PC-9 (cell line): ENCODE measurements at regions of chr1 and their contacts with region 1.

Region 1: GRCh38 chr1:28581536-28582247 is 10.4 kb upstream of the RAB42 start:
- DNase-seq: peak; percentile 84 to 93
- H3K4me3 ChIP-seq: peak overlapping the region; percentile 87
- H3K27ac ChIP-seq: peak overlapping the region; percentile 81
- H3K4me1 ChIP-seq: peaks cover 9% of the 10 kb centered on the region
- H3K27me3 ChIP-seq: no peaks in the 10 kb centered on the region
- CTCF ChIP-seq: no peak

Region 2: GRCh38 chr1:28266920-28267322 is 314.8 kb before region 1 on chr1:
- CTCF ChIA-PET with region 1: no interaction called
- POLR2A ChIA-PET with region 1: interaction called, 21 read pairs
- intact Hi-C with region 1: no loop called
- DNase-seq: no peak
- H3K4me3 ChIP-seq: no peak overlapping the region
- H3K27ac ChIP-seq: no peak overlapping the region
- H3K4me1 ChIP-seq: peaks cover 4% of the 10 kb centered on the region; the same call in 1 of the 2 replicates
- H3K27me3 ChIP-seq: no peaks in the 10 kb centered on the region
- CTCF ChIP-seq: no peak

Region 3: GRCh38 chr1:28280501-28280900 is 301.2 kb before region 1 on chr1:
- CTCF ChIA-PET with region 1: no interaction called
- POLR2A ChIA-PET with region 1: no interaction called
- intact Hi-C with region 1: no loop called
- DNase-seq: no peak
- H3K4me3 ChIP-seq: no peak overlapping the region
- H3K27ac ChIP-seq: no peak overlapping the region
- H3K4me1 ChIP-seq: no peaks in the 10 kb centered on the region
- H3K27me3 ChIP-seq: no peaks in the 10 kb centered on the region
- CTCF ChIP-seq: no peak

Region 4: DNA sequence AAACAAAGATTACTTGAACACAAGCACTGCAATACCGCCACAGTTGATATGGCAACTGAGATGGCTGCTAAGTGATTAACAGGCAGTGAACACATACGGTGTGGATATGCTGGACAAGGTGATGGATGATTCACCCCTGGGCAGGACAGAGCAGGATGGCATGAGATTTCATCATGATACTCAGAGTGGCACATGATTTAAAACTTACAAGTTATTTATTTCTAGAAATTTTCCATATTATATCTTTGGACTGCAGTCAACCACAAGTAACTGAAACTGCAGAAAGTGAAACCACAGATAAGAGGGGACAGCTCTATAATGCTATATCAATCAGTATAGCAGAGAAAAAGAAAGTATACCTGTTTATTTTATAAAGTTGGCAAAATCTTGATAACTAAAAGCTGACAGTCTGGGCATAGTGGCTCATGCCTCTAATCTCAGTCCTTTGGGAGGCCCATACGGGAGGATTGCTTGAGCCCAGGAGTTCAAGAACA is 164.2 kb before region 1 on chr1:
- CTCF ChIA-PET with region 1: no interaction called
- POLR2A ChIA-PET with region 1: no interaction called
- intact Hi-C with region 1: no loop called
- DNase-seq: peak; percentile 58 to 85
- H3K4me3 ChIP-seq: no peak overlapping the region
- H3K27ac ChIP-seq: peak overlapping the region; percentile 100
- H3K4me1 ChIP-seq: peaks cover 21% of the 10 kb centered on the region
- H3K27me3 ChIP-seq: no peaks in the 10 kb centered on the region
- CTCF ChIP-seq: no peak

Region 5: GRCh38 chr1:28437934-28438699 is 143.6 kb before region 1 on chr1:
- CTCF ChIA-PET with region 1: no interaction called
- POLR2A ChIA-PET with region 1: no interaction called
- intact Hi-C with region 1: no loop called
- DNase-seq: peak; percentile 87 to 93
- H3K4me3 ChIP-seq: peak overlapping the region; percentile 56
- H3K27ac ChIP-seq: peak overlapping the region; percentile 79
- H3K4me1 ChIP-seq: peaks cover 37% of the 10 kb centered on the region
- H3K27me3 ChIP-seq: no peaks in the 10 kb centered on the region
- CTCF ChIP-seq: no peak

Region 6: GRCh38 chr1:28470146-28470545 is 111.5 kb before region 1 on chr1:
- CTCF ChIA-PET with region 1: no interaction called
- POLR2A ChIA-PET with region 1: interaction called, 13 read pairs
- intact Hi-C with region 1: no loop called
- DNase-seq: no peak
- H3K4me3 ChIP-seq: no peak overlapping the region
- H3K27ac ChIP-seq: no peak overlapping the region
- H3K4me1 ChIP-seq: peaks cover 8% of the 10 kb centered on the region
- H3K27me3 ChIP-seq: no peaks in the 10 kb centered on the region
- CTCF ChIP-seq: no peak

Region 7: GRCh38 chr1:28526889-28527288 is 54.8 kb before region 1 on chr1:
- CTCF ChIA-PET with region 1: no interaction called
- POLR2A ChIA-PET with region 1: no interaction called
- intact Hi-C with region 1: loop called (anchors 2 kb)
- DNase-seq: peak; percentile 92 to 97
- H3K4me3 ChIP-seq: peak overlapping the region; percentile 19; the same call in 1 of the 2 replicates
- H3K27ac ChIP-seq: peak overlapping the region; percentile 98
- H3K4me1 ChIP-seq: peaks cover 42% of the 10 kb centered on the region
- H3K27me3 ChIP-seq: no peaks in the 10 kb centered on the region
- CTCF ChIP-seq: no peak

Region 8: DNA sequence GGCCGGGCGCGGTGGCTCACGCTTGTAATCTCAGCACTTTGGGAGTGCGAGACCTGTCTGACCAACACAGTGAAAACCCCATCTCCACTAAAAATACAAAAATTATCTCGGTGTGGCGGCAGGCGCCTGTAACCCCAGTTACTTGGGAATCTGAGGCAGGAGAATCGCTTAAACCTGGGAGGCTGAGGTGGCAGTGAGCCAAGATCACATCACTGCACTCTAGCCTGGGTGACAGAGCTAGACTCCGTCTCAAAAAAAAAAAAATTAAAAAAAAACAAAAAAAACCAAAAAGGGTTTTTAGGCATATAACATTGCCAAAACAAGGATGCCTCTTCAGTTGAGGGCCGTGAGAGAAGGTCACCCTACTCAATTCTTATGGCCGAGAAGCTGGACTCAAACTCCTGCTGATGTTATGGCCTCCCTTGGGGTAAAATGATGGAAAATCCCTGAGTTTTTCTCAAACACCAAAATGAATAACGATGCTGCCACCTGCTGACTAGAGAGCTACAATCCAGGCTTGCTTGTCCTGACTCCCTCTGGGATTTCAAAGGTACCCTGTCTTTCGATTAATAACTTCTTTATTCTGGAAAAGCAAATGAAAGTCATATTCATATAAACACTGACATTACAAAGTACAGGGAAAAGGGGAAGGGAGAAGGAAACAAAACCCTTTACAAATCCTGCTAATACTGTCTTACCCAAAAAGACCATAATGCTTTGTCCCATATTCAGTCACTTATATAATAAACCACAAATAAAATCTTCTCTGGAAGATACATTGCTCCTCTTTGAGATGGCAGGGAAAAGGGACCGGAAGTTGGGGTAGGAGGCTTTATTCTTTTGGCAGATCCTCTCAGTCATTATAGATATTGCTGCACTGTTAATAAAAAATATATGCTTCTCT is 21.1 kb after region 1 on chr1:
- CTCF ChIA-PET with region 1: interaction called, 5 read pairs
- POLR2A ChIA-PET with region 1: interaction called, 9 read pairs
- intact Hi-C with region 1: loop called (anchors 2 kb)
- DNase-seq: peak; percentile 47 to 50
- H3K4me3 ChIP-seq: no peak overlapping the region
- H3K27ac ChIP-seq: peak overlapping the region; percentile 89
- H3K4me1 ChIP-seq: peaks cover 23% of the 10 kb centered on the region
- H3K27me3 ChIP-seq: no peaks in the 10 kb centered on the region
- CTCF ChIP-seq: peak; percentile 75